ENCODE measurements at regions of chrX and their contacts with region 1.

Region 1: GRCh38 chrX:14029425-14030173 is at the start of gene GEMIN8:
- H3K4me3 ChIP-seq: peak within 1 kb of the TSS; percentile 51
- H3K27ac ChIP-seq: peak within 1 kb of the TSS; percentile 91
- H3K4me1 ChIP-seq: peaks cover 17% of the 10 kb centered on the region
- CTCF ChIP-seq: peak; percentile 30; the same call in 1 of the 2 replicates

Region 2: DNA sequence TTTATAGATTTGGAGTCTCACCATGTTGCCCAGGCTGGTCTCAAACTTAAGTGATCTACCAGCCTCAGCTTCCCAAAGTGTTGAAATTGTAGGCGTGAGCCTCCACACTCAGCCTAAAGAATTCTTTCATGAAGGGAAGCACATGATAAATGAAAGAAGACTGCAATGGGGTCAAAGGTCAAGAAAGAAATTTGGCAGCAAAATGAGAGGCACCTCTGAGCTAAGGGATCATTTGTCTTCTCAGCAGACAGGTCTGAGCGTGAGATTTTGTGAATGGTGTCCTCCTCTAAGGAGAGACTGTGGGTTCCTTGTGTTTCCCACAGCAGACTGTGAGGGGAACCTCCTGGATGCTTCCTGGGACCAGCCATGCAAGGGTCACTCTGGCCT is 517.7 kb before region 1 on chrX:
- CTCF ChIA-PET with region 1: interaction called, 50 read pairs
- POLR2A ChIA-PET with region 1: no interaction called
- H3K4me3 ChIP-seq: no peak overlapping the region
- H3K27ac ChIP-seq: no peak overlapping the region
- H3K4me1 ChIP-seq: no peaks in the 10 kb centered on the region
- CTCF ChIP-seq: no peak

Region 3: DNA sequence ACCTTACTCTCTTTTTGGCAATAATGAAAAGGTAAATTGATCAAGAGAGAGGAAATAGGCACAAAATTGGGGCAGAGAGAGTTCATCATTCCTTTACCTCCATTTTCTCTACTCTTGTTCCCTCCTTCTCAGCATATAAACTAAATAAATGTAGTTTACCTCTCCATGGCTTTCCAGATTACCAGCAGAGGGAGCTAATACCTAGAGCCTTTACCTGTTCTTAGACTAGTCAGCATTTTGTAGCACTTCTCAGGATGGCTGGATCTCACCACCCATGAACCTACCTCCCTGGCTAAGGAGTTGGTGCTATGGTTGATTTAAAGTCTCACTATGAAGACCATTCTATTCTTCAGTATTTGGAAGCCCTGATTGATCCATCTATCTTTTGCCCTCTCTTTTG is 279.4 kb before region 1 on chrX:
- CTCF ChIA-PET with region 1: interaction called, 22 read pairs
- POLR2A ChIA-PET with region 1: no interaction called
- H3K4me3 ChIP-seq: no peak overlapping the region
- H3K27ac ChIP-seq: no peak overlapping the region
- H3K4me1 ChIP-seq: no peaks in the 10 kb centered on the region
- CTCF ChIP-seq: no peak

Region 4: GRCh38 chrX:13837290-13837745 is 192.3 kb before region 1 on chrX:
- CTCF ChIA-PET with region 1: no interaction called
- POLR2A ChIA-PET with region 1: no interaction called
- H3K4me3 ChIP-seq: peak overlapping the region; percentile 14
- H3K27ac ChIP-seq: no peak overlapping the region
- H3K4me1 ChIP-seq: peaks cover 10% of the 10 kb centered on the region; the same call in 1 of the 2 replicates
- CTCF ChIP-seq: no peak

Region 5: DNA sequence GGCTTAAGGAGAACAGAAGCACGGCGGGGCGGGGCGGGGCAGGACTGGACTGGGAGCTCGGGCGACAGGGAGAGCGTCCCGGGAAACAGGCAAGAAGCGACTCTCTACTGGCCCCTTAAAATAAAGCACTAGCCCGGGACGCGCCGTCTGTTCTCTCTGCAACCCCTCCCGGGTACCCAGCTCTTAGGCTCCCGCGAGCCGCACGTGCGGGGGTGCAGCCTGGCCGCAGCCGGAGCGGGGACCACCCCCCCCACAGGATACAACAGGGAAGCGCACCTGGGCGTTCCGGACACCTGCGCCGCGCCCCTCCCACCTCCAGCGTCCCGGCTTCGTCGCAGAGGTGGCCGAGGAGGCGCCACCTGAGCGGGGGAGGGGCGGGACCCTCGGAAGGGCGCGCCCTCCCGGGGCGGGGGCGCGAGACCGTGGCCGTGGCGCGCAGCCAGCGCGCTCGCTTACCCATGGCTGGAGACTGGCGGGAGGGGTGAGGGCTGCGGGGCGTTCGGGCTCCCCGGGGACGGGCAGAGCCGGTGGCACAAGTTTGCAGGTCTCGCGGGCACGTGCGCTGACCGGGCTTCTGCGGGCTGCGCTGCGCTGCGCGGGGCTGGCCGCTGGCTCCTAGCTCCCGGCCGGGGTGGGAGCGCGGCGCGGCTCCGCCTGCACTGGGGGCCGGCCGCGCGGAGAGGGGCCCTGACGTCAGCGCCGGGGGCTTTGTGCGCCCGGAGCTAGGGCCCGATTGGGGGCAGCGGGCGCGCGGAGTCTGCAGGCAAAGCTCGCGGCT is 91.4 kb before region 1 on chrX:
- CTCF ChIA-PET with region 1: interaction called, 5 read pairs
- POLR2A ChIA-PET with region 1: interaction called, 11 read pairs
- H3K4me3 ChIP-seq: peak overlapping the region; percentile 58
- H3K27ac ChIP-seq: peak overlapping the region; percentile 56; the same call in 1 of the 2 replicates
- H3K4me1 ChIP-seq: peaks cover 11% of the 10 kb centered on the region
- CTCF ChIP-seq: peak; percentile 42; the same call in 1 of the 2 replicates